T-cell (primary cell): ENCODE measurements at regions of chr6 and their contacts with region 1.

Region 1: GRCh38 chr6:54747955-54748354 is 98.6 kb upstream of the FAM83B start:
- DNase-seq: no peak
- ATAC-seq: no peak
- H3K4me3 ChIP-seq: no peak overlapping the region
- H3K4me3 Mint-ChIP-seq: no peak overlapping the region
- H3K27ac ChIP-seq: no peak overlapping the region
- H3K27ac Mint-ChIP-seq: no peak overlapping the region
- H3K4me1 ChIP-seq: no peaks in the 10 kb centered on the region
- H3K4me1 Mint-ChIP-seq: no peaks in the 10 kb centered on the region
- H3K27me3 ChIP-seq: no peaks in the 10 kb centered on the region
- H3K27me3 Mint-ChIP-seq: no peaks in the 10 kb centered on the region

Region 2: GRCh38 chr6:54697424-54697823 is 50.5 kb before region 1 on chr6:
- CTCF ChIA-PET with region 1: no interaction called
- POLR2A ChIA-PET with region 1: no interaction called
- DNase-seq: no peak
- ATAC-seq: no peak
- H3K4me3 ChIP-seq: no peak overlapping the region
- H3K4me3 Mint-ChIP-seq: no peak overlapping the region
- H3K27ac ChIP-seq: no peak overlapping the region
- H3K27ac Mint-ChIP-seq: no peak overlapping the region
- H3K4me1 ChIP-seq: no peaks in the 10 kb centered on the region
- H3K4me1 Mint-ChIP-seq: no peaks in the 10 kb centered on the region
- H3K27me3 ChIP-seq: no peaks in the 10 kb centered on the region
- H3K27me3 Mint-ChIP-seq: no peaks in the 10 kb centered on the region

Region 3: DNA sequence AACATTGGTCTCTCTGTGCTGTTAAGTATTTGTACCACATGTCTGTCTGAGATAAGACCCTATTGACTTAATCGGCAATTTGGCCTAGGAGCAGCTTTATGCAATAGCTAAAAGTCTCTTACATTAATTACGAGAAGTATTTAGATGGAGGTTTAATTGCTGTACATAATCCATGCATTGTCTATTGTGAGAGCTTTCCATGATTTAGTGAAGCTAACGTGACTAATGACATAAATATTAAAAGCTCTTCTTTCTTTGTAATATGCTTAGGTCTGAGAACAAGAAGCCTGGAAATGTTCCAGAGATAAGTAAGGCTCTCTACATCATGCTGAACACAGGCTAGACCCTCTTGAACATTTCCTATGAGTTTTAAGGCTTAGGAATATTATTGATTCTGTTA is 65.9 kb after region 1 on chr6:
- CTCF ChIA-PET with region 1: no interaction called
- POLR2A ChIA-PET with region 1: no interaction called
- DNase-seq: no peak
- ATAC-seq: no peak
- H3K4me3 ChIP-seq: no peak overlapping the region
- H3K4me3 Mint-ChIP-seq: no peak overlapping the region
- H3K27ac ChIP-seq: no peak overlapping the region
- H3K27ac Mint-ChIP-seq: no peak overlapping the region
- H3K4me1 ChIP-seq: no peaks in the 10 kb centered on the region
- H3K4me1 Mint-ChIP-seq: no peaks in the 10 kb centered on the region
- H3K27me3 ChIP-seq: no peaks in the 10 kb centered on the region
- H3K27me3 Mint-ChIP-seq: no peaks in the 10 kb centered on the region

Region 4: GRCh38 chr6:54830216-54830615 is 82.3 kb after region 1 on chr6:
- CTCF ChIA-PET with region 1: no interaction called
- POLR2A ChIA-PET with region 1: interaction called in 1 of 2 experiments, 12 read pairs
- DNase-seq: no peak
- ATAC-seq: no peak
- H3K4me3 ChIP-seq: no peak overlapping the region
- H3K4me3 Mint-ChIP-seq: no peak overlapping the region
- H3K27ac ChIP-seq: no peak overlapping the region
- H3K27ac Mint-ChIP-seq: no peak overlapping the region
- H3K4me1 ChIP-seq: no peaks in the 10 kb centered on the region
- H3K4me1 Mint-ChIP-seq: no peaks in the 10 kb centered on the region
- H3K27me3 ChIP-seq: no peaks in the 10 kb centered on the region
- H3K27me3 Mint-ChIP-seq: no peaks in the 10 kb centered on the region

Region 5: DNA sequence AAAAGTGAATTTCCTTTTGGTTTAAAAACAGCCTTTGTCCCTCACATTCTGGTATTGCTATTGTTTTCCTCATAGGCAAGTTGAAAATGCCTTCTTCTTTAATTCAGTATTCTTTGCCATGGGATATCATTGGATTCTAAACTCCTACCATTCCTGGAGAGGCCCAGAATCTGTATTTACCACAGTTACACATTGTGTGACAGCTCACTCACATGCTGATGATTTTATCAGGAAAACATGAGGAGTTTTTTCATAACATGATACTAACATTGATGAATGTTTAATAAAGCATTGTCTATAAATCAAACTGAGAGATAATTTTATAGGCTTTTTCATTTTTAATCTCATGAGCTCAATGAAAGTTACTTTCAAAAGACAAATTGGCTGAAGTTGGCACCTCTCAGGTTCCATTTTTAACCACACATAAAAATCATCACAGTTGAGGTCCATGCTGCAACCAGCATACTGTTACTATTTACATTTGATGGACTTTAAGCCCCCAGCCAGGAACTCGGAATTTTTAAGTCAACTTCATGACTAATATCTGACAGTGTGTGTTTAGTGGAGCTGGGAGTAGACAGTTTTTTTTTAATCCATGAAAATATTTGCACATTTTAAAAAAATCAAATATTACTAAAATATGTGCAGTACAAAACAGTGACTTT is 181.4 kb after region 1 on chr6:
- CTCF ChIA-PET with region 1: no interaction called
- POLR2A ChIA-PET with region 1: no interaction called
- DNase-seq: no peak
- ATAC-seq: no peak
- H3K4me3 ChIP-seq: no peak overlapping the region
- H3K4me3 Mint-ChIP-seq: no peak overlapping the region
- H3K27ac ChIP-seq: no peak overlapping the region
- H3K27ac Mint-ChIP-seq: no peak overlapping the region
- H3K4me1 ChIP-seq: no peaks in the 10 kb centered on the region
- H3K4me1 Mint-ChIP-seq: no peaks in the 10 kb centered on the region
- H3K27me3 ChIP-seq: no peaks in the 10 kb centered on the region
- H3K27me3 Mint-ChIP-seq: no peaks in the 10 kb centered on the region